ENCODE measurements at regions of chr19 and their contacts with region 1.

Region 1: GRCh38 chr19:38618590-38619360 is at the start of gene EIF3K:
- DNase-seq: peak; percentile 97
- ATAC-seq: peak; percentile 91
- H3K4me3 ChIP-seq: peak within 1 kb of the TSS; percentile 92 to 95 (median 94)
- H3K27ac ChIP-seq: peak within 1 kb of the TSS; percentile 66
- H3K4me1 ChIP-seq: peaks cover 36% of the 10 kb centered on the region
- H3K27me3 ChIP-seq: no peaks in the 10 kb centered on the region; a peak in 2 of 5 replicates
- CTCF ChIP-seq: no peak
- EP300 ChIP-seq: no peak
- POLR2A ChIP-seq: peak; percentile 76 to 88
- RAD21 ChIP-seq: no peak
- total RNA-seq, gene EIF3K: 258 and 351 TPM in 2 replicates

Region 2: DNA sequence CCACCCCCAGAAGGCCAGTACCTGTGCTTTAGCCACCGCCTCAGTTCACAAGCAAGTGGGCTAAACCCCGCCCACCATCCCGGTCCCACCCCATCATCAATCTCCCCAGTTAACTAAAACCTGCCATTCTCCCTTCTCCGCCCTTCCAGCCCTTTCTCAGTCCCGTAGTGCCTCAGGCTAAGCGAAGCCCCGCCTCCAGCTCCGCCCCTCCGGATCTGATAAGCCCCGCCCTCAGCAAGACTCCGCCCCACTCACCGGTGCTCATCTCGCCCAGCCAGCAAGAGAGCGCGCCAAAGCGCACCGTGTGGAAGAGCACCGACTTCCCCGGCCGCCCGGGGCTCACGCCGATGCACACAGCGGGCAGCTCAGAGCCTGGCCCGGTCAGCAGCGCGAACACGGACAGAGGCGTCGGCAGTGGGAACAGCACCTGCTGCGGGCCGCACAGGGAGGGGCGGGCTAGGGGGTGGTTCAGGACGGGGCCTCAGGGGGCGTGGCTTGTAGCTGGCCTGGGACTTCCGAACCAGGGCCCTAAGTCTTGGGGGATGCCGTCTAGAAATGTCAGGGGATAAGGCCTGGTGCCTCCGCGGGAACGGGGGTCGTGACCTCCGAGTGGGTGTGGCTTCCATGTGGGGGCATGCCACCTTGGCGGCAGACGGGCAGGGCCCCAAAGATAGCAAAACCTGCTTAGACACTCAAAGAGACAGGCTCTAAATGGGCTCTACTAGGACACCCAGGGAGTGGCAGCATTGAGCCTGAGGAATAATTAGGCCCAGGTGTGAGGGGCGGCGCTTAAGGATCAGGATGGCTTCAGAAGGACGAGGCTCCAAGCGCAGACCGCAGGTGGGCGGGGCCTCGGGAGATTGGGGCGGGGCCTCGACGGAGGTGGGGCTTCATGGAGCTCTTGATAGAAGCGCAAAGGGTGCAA is 22.5 kb before region 1 on chr19:
- CTCF ChIA-PET with region 1: no interaction called
- POLR2A ChIA-PET with region 1: interaction called, 10 read pairs
- in situ Hi-C with region 1: no loop called
- intact Hi-C with region 1: no loop called
- DNase-seq: peak; percentile 20
- ATAC-seq: peak; percentile 80
- H3K4me3 ChIP-seq: peak overlapping the region in 2 of 3 experiments; percentile 28 to 63; a peak in 3 of 6 replicates
- H3K27ac ChIP-seq: no peak overlapping the region
- H3K4me1 ChIP-seq: 0 out of 2 replicates have a peak, but pooled peaks cover 7% of the 10 kb centered on the region
- H3K27me3 ChIP-seq: no peaks in the 10 kb centered on the region; a peak in 1 of 5 replicates
- CTCF ChIP-seq: no peak
- EP300 ChIP-seq: no peak
- POLR2A ChIP-seq: no peak
- RAD21 ChIP-seq: no peak

Region 3: DNA sequence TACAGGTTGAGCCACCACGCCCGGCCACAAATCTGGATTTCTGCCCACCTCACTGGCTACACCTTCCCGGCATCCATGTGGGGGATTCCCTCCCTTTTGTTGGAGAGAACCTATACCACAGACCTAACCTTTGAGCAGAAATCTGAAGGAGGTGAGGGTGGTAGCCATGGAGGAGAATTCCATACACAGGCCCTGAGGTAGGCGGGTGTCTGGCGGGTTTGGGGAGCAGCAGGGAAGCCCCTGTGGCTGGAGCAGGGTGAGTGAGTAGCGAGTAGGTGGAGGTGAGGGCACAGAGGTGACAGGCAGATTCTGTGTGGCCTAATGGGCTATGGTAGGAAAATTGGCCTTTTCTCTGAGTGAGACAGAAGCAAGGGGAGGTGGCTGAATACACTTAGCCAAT is 10.8 kb after region 1 on chr19:
- CTCF ChIA-PET with region 1: no interaction called
- POLR2A ChIA-PET with region 1: interaction called, 16 read pairs
- in situ Hi-C with region 1: no loop called
- intact Hi-C with region 1: no loop called
- DNase-seq: no peak
- ATAC-seq: no peak
- H3K4me3 ChIP-seq: no peak overlapping the region
- H3K27ac ChIP-seq: no peak overlapping the region
- H3K4me1 ChIP-seq: no peaks in the 10 kb centered on the region
- H3K27me3 ChIP-seq: no peaks in the 10 kb centered on the region
- CTCF ChIP-seq: no peak
- EP300 ChIP-seq: no peak
- POLR2A ChIP-seq: no peak
- RAD21 ChIP-seq: no peak

Measured in HepG2 (cell line).